MCF 10A (cell line): ENCODE measurements at regions of chr10 and their contacts with region 1.

Region 1: DNA sequence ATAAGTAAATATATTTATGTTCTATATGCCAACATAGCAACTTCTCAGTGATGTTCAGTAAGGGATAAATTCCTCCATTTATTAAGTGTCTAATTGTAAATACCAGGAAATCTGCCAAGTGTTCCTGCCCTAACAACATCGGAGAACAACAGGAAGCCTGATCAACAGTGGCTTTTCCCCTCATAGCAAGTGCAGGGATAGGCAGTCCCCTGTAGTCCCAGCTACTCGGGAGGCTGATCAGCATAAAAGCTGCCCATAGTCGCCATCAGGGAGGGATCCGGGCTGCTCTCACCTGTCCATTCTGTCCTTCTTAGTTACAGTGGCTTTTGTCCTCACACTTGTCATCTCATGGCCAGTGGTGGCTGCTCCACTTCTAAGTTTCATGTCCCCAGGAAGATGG is 141.3 kb downstream of the IDE start:
- DNase-seq: no peak
- H3K4me3 Mint-ChIP-seq: no peak overlapping the region
- H3K27ac Mint-ChIP-seq: no peak overlapping the region
- H3K4me1 Mint-ChIP-seq: no peaks in the 10 kb centered on the region
- H3K27me3 Mint-ChIP-seq: no peaks in the 10 kb centered on the region
- CTCF ChIP-seq: no peak

Region 2: GRCh38 chr10:91758303-91759146 is 674.1 kb before region 1 on chr10:
- CTCF ChIA-PET with region 1: no interaction called
- POLR2A ChIA-PET with region 1: no interaction called
- intact Hi-C with region 1: loop called (anchors 1 kb)
- DNase-seq: peak; percentile 52
- H3K4me3 Mint-ChIP-seq: no peak overlapping the region
- H3K27ac Mint-ChIP-seq: no peak overlapping the region
- H3K4me1 Mint-ChIP-seq: no peaks in the 10 kb centered on the region
- H3K27me3 Mint-ChIP-seq: peaks cover 54% of the 10 kb centered on the region
- CTCF ChIP-seq: peak; percentile 57

Region 3: GRCh38 chr10:91923371-91924211 is 509.0 kb before region 1 on chr10 and contains the start of gene BTAF1:
- CTCF ChIA-PET with region 1: no interaction called
- POLR2A ChIA-PET with region 1: no interaction called
- intact Hi-C with region 1: loop called (anchors 10 kb)
- DNase-seq: peak; percentile 90
- H3K4me3 Mint-ChIP-seq: peak within 1 kb of the TSS; percentile 84
- H3K27ac Mint-ChIP-seq: peak within 1 kb of the TSS; percentile 98
- H3K4me1 Mint-ChIP-seq: peaks cover 17% of the 10 kb centered on the region
- H3K27me3 Mint-ChIP-seq: no peaks in the 10 kb centered on the region
- CTCF ChIP-seq: no peak
- total RNA-seq, gene BTAF1: 35.5 and 37.0 TPM in 2 replicates

Region 4: DNA sequence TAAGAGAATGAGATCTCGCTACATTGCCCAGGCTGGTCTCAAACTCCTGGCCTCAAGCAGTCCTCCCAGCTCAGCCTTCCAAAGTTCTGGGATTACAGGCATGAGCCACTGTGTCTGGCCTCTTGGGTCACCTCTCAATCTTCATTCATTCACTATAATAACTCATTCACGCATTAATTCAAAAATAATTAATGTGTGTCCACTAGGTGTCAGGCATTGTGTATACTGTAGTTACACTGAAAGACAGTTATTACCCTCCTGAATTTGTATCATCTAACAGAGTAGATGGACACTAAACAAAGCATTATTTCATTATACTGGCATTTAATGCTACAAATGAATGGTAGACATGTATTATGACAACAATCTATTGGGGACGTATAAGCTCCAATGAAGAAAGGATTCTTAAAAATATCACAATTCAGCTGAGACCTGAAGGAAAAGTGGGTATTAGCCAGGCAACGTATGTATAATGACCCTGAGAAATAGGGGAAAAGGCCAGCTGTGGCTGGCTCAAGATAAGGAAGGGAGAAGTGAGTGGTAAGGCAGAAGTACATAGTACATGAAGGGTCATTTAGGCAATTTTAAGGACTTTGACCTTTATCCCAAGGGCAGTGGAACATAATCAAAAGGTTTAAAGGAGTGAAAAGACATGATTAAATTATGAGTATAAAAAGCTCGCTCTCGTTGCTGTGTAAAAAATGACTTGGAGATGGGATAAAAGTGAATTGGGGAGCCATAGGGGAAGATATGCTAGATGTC is 358.3 kb before region 1 on chr10:
- CTCF ChIA-PET with region 1: interaction called, 8 read pairs
- POLR2A ChIA-PET with region 1: no interaction called
- intact Hi-C with region 1: loop called (anchors 5 kb)
- DNase-seq: peak; percentile 29
- H3K4me3 Mint-ChIP-seq: no peak overlapping the region
- H3K27ac Mint-ChIP-seq: no peak overlapping the region
- H3K4me1 Mint-ChIP-seq: peaks cover 7% of the 10 kb centered on the region
- H3K27me3 Mint-ChIP-seq: no peaks in the 10 kb centered on the region
- CTCF ChIP-seq: peak; percentile 30

Region 5: GRCh38 chr10:92087750-92088395 is 344.7 kb before region 1 on chr10:
- CTCF ChIA-PET with region 1: interaction called, 33 read pairs
- POLR2A ChIA-PET with region 1: interaction called, 4 read pairs
- intact Hi-C with region 1: loop called (anchors 1 kb)
- DNase-seq: peak; percentile 89
- H3K4me3 Mint-ChIP-seq: no peak overlapping the region
- H3K27ac Mint-ChIP-seq: no peak overlapping the region
- H3K4me1 Mint-ChIP-seq: peaks cover 6% of the 10 kb centered on the region
- H3K27me3 Mint-ChIP-seq: no peaks in the 10 kb centered on the region
- CTCF ChIP-seq: peak; percentile 94

Region 6: DNA sequence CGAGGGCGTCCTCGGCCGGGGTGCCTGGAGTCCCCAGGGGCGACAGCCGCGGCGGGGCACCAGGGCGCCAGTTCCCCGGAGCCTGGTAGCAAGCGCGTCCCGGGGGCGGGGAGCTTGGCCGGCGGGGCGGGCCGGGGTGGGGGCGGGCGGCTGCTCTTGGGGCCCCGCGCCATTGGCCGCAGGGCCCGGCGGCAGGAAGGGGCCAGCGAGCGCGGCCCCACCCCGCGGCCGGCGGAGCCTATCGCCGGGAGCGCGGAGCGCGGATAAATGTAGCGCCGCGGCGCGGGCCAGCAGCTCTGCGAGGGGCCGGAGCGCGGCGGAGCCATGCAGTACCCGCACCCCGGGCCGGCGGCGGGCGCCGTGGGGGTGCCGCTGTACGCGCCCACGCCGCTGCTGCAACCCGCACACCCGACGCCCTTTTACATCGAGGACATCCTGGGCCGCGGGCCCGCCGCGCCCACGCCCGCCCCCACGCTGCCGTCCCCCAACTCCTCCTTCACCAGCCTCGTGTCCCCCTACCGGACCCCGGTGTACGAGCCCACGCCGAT is 257.1 kb after region 1 on chr10 and contains the start of gene HHEX:
- CTCF ChIA-PET with region 1: no interaction called
- POLR2A ChIA-PET with region 1: no interaction called
- intact Hi-C with region 1: no loop called
- DNase-seq: peak; percentile 22
- H3K4me3 Mint-ChIP-seq: peak within 1 kb of the TSS; percentile 54
- H3K27ac Mint-ChIP-seq: no peak within 1 kb of the TSS
- H3K4me1 Mint-ChIP-seq: no peaks in the 10 kb centered on the region
- H3K27me3 Mint-ChIP-seq: no peaks in the 10 kb centered on the region
- CTCF ChIP-seq: no peak
- total RNA-seq, gene HHEX: 0.19 and 0.54 TPM in 2 replicates